HEK293 (cell line): ENCODE measurements at regions of chr19 and their contacts with region 1.

Region 1: GRCh38 chr19:3586124-3586626 is 897 bp downstream of the GIPC3 start:
- H3K4me3 ChIP-seq: no peak overlapping the region
- H3K27ac ChIP-seq: no peak overlapping the region
- H3K4me1 ChIP-seq: no peaks in the 10 kb centered on the region
- CTCF ChIP-seq: peak; percentile 31; the same call in 1 of the 2 replicates

Region 2: DNA sequence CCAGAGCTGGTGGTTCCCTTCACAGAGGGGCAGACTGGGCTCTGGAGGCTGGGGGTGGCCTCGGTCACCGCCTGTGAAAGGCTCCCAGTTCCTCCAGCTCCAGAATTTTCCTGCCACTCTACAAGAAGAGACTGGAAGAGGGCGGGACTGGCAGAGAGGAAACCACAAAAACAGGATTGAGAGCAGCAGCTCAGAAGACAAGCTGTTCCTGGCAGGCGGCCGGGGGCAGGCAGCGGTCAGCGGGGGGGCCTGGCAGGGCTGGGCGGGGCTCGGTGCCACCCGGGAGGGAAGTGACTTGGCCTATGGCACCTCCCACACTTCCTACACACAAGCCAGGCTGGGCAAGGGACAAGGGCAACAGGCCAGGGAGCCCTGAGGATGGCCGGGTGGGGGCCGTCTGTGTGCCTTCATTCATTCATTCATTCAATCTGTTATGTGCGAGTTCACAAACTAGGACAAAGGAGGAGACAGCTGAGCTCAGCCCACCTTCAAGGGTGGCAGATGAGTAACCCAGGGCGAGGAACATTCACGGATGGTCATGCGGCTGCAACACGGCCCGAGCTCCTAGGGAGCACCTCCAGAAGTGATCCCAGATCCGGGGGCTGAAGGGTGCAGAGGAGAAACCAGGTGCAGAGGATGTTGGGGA is 1553.8 kb before region 1 on chr19:
- CTCF ChIA-PET with region 1: no interaction called
- POLR2A ChIA-PET with region 1: no interaction called
- H3K4me3 ChIP-seq: no peak overlapping the region
- H3K27ac ChIP-seq: no peak overlapping the region; the same call in 1 of the 2 replicates
- H3K4me1 ChIP-seq: peaks cover 2% of the 10 kb centered on the region; the same call in 1 of the 2 replicates
- CTCF ChIP-seq: no peak

Region 3: DNA sequence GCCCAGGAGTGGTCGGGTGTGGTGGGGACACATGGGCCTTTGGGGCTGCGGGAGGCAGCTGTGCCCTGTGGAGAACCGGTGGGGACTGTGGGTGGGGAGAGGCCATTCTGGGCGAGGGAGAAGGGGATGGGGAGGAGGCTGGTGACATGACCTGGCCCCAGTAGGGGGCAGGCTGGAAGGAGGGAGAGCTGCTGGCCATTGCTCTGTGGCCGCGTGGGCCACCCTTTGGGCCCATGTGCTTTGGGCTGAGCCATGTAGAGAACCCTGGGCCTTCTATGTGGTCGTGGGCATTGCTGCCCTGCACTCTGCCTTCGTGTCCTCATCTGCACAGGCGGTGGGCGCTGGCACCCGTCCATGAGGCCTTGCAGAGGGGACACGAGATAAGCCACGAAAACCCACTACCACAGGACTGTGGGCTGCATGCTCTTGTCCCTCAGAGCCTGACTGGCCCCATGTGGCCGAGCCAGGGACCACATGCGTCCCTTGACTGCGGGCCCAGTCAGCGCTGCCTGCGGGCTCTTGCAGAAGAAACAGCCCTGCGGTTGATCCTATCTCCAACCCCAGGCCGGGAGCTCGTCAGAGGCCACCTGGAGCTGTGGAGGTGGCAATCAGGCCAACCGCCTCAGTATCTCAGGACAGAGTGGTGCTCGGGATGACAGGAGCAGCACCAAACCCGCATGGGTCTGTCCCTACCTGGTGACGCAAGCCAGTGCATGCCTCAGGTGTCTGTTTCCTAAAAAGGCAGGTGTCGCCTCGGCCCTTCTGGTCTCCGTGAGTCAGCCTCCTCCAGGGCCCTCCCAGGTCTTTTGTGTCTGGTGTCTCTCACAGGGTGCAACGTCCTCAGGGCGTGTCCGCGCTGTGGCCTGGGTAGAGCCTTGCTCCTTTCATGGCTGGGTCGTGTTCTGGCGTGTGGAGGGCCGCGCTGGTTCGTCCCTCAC is 65.7 kb before region 1 on chr19:
- CTCF ChIA-PET with region 1: no interaction called
- POLR2A ChIA-PET with region 1: no interaction called
- H3K4me3 ChIP-seq: no peak overlapping the region
- H3K27ac ChIP-seq: no peak overlapping the region
- H3K4me1 ChIP-seq: peaks cover 4% of the 10 kb centered on the region; the same call in 1 of the 2 replicates
- CTCF ChIP-seq: no peak

Region 4: DNA sequence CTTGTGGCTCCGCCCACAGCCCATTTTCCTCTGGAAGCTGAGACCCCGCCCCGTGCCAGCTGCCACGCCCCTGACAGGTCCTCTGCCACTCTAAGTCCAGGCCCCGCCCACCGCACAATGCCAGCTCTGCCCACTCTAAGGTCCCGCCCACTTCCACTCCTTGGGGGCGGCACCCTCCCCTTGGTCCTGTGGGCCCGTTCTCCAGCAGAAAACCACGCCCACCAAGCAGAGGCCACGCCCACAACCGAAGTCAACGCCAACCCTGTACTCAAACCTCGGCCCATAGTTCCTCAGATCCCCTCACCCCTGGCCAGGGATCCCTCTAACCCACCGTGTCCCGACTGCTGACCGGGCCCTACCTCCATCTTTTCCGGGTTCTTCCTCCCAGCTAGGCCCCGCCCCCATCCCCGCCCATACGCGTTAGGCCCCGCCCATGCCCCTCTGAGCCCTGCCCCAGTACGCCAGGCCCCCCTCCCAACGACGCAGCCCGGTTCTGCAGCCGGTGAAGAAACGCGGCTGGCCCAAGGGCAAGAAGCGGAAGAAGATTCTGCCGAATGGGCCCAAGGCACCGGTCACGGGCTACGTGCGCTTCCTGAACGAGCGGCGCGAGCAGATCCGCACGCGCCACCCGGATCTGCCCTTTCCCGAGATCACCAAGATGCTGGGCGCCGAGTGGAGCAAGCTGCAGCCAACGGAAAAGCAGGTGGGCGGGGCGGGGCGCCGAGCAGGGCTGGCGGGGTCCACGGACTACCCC is 12.1 kb before region 1 on chr19:
- CTCF ChIA-PET with region 1: interaction called, 6 read pairs
- POLR2A ChIA-PET with region 1: interaction called, 13 read pairs
- H3K4me3 ChIP-seq: peak overlapping the region; percentile 84; the same call in 1 of the 2 replicates
- H3K27ac ChIP-seq: no peak overlapping the region
- H3K4me1 ChIP-seq: no peaks in the 10 kb centered on the region
- CTCF ChIP-seq: no peak